Right cardiac atrium (tissue), 5 donors: ENCODE measurements at regions of chr18 and their contacts with region 1.

Region 1: DNA sequence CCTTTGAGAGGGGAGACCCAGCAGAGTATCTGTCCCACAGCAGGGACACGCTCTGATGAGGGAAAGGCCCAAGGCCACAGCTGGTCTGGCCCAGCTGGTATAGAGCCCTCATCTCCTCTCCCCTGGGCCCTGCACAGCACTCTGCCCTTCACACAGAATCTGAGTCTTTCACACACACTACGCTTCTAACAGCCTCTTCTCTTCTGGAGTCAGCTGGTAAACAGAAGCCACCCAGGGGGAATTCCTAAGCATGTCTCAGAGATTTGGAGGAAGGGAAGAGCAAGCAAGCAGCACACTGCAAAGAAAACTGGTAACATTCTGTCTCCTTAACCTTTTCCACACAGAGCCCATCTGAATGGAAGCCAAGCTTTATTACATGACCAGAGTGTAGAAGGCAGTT is 121.1 kb upstream of the ACAA2 start:
- DNase-seq: no peak
- ATAC-seq: peak in 1 of 2 donors; percentile 29
- H3K4me3 ChIP-seq: no peak overlapping the region
- H3K27ac ChIP-seq: no peak overlapping the region
- H3K4me1 ChIP-seq: no peaks in the 10 kb centered on the region
- H3K27me3 ChIP-seq: no peaks in the 10 kb centered on the region

Region 2: DNA sequence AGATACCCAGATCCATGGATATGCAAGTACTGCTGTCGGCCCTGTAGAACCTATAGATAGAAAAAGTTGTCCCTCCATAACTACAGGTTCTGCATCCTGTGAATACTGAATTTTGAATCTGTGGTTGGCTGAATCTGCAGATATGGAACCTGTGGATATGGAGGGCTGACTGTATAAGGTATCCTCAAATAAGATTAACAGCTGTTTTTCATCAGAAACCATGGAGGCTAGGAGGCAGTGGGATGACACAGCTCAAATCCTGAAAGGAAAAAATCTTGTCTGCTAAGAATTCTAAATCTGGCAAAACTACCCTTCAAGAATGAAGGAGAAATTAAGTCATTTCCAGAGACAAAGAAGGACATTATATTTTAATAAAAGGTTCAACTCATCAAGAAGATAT is 106.5 kb before region 1 on chr18:
- intact Hi-C with region 1: no loop called
- DNase-seq: no peak
- ATAC-seq: no peak
- H3K4me3 ChIP-seq: no peak overlapping the region
- H3K27ac ChIP-seq: no peak overlapping the region
- H3K4me1 ChIP-seq: no peaks in the 10 kb centered on the region
- H3K27me3 ChIP-seq: no peaks in the 10 kb centered on the region

Region 3: GRCh38 chr18:49849331-49850217 is 84.9 kb before region 1 on chr18:
- intact Hi-C with region 1: no loop called
- DNase-seq: peak in 2 of 3 donors; percentile 48 to 49
- ATAC-seq: peak; percentile 66 to 80
- H3K4me3 ChIP-seq: no peak overlapping the region
- H3K27ac ChIP-seq: no peak overlapping the region
- H3K4me1 ChIP-seq: peaks cover 2% of the 10 kb centered on the region
- H3K27me3 ChIP-seq: no peaks in the 10 kb centered on the region

Region 4: DNA sequence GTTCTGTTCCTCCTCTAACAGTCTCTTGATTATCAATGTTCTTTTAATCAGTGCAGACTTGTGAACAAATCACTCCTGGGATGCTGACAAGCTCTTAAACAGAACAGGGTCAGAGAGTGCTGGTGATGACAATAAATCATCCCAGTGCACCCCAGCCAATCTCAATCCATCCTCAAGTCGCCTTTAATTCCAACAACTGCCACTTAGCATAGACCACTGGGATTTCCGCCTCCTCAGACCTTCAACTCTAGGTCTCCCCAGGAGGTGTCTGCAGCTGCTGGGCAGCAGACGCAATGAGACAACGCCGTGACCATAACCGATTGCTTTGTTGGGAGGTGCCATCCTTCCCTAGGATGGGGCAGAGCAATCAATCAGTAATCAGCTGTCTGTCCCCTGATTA is 63.1 kb after region 1 on chr18:
- intact Hi-C with region 1: loop called in 1 of 4 experiments (anchors 10 kb)
- DNase-seq: no peak
- ATAC-seq: peak; percentile 43 to 57
- H3K4me3 ChIP-seq: no peak overlapping the region
- H3K27ac ChIP-seq: no peak overlapping the region
- H3K4me1 ChIP-seq: peaks cover 3% of the 10 kb centered on the region
- H3K27me3 ChIP-seq: no peaks in the 10 kb centered on the region